Naive thymus-derived CD8-positive, alpha-beta T cell (primary cell): ENCODE measurements at regions of chr16 and their contacts with region 1.

Region 1: GRCh38 chr16:70737377-70738082 is 51.7 kb upstream of the MTSS2 start:
- DNase-seq: peak; percentile 65 to 94 (median 87)
- ATAC-seq: peak; percentile 86 to 88
- H3K4me3 Mint-ChIP-seq: peak overlapping the region; percentile 57 to 89 (median 84)
- H3K27ac Mint-ChIP-seq: peak overlapping the region; percentile 96 to 100 (median 100)
- H3K4me1 Mint-ChIP-seq: peaks cover 43 to 84% (median 67%) of the 10 kb centered on the region in 4 donors
- H3K27me3 Mint-ChIP-seq: no peaks in the 10 kb centered on the region

Region 2: DNA sequence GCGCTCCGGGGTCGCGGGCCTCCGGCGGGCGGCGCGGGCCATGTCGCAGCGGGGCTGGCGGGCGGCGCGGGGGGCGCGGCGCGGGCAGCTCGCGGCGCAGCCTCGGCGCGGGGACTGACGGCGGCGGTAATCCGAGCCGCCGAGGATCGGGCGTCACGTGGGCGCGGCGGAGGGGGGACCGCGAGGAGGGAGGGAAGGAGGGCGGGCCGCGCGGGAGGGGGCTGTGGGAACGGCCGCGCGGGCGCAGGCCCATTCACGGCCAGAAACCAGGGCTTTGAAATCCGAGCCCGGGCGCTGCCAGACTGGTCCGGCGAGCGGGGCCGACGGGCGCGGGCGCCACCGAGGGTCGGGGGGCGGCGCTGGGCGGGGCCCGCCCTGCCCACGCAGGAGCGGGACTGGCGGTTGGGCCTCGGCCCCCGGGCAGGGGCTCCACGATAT is 51.6 kb before region 1 on chr16 and contains the start of gene MTSS2:
- POLR2A ChIA-PET with region 1: interaction called, 50 read pairs
- DNase-seq: peak in 9 of 10 donors; percentile 25 to 73 (median 47)
- ATAC-seq: peak; percentile 76 to 78
- H3K4me3 Mint-ChIP-seq: peak within 1 kb of the TSS; percentile 64 to 85 (median 74)
- H3K27ac Mint-ChIP-seq: peak within 1 kb of the TSS in 9 of 10 donors; percentile 25 to 77 (median 53)
- H3K4me1 Mint-ChIP-seq: peaks cover 8 to 34% (median 18%) of the 10 kb centered on the region in 4 donors
- H3K27me3 Mint-ChIP-seq: peaks cover 0 to 5% (median 0%) of the 10 kb centered on the region in 5 donors
- polyA plus RNA-seq, gene MTSS2: 0.28 TPM in 1 of 3 donors, not detected in the others

Region 3: DNA sequence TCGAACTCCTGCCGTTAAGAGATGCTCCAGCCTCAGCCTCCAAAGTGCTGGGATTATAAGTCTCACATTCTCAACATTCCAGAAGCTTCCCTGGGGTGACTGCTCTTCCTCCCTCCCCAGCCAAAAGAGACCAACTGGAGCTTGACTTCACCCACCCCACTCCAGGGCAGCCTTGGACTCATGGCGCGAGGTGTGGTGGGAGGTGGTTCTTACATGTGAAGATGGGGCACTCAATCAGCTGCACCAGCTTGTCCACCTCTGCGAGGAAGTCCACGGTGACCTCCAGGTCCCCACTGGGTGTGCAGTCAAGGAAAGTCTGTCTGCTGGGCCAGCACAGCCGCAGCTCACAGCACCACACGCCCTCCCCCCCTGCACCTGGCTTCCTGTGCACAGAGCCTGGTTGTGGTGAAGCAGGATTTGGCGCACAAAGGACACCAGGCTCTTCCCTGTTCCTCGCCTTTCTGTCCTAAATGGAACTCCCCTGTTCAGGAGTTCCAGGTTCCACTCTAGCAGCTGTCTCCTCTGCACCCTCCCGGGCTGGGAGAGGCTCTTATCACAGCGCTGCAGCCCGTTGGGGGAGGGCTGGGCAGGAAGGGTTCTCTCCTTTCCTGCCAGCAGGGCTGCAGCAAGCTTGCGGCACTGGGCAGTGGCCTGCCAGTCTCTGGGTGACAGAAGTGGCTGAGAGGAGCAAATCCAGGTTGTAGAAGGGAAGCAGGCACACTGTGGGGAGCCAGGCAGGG is 42.0 kb before region 1 on chr16:
- POLR2A ChIA-PET with region 1: interaction called, 60 read pairs
- DNase-seq: peak in 5 of 10 donors; percentile 13 to 47 (median 35)
- ATAC-seq: peak; percentile 50 to 52
- H3K4me3 Mint-ChIP-seq: peak overlapping the region; percentile 53 to 87 (median 71)
- H3K27ac Mint-ChIP-seq: peak overlapping the region; percentile 84 to 96 (median 92)
- H3K4me1 Mint-ChIP-seq: peaks cover 24 to 48% (median 40%) of the 10 kb centered on the region in 4 donors
- H3K27me3 Mint-ChIP-seq: no peaks in the 10 kb centered on the region

Region 4: DNA sequence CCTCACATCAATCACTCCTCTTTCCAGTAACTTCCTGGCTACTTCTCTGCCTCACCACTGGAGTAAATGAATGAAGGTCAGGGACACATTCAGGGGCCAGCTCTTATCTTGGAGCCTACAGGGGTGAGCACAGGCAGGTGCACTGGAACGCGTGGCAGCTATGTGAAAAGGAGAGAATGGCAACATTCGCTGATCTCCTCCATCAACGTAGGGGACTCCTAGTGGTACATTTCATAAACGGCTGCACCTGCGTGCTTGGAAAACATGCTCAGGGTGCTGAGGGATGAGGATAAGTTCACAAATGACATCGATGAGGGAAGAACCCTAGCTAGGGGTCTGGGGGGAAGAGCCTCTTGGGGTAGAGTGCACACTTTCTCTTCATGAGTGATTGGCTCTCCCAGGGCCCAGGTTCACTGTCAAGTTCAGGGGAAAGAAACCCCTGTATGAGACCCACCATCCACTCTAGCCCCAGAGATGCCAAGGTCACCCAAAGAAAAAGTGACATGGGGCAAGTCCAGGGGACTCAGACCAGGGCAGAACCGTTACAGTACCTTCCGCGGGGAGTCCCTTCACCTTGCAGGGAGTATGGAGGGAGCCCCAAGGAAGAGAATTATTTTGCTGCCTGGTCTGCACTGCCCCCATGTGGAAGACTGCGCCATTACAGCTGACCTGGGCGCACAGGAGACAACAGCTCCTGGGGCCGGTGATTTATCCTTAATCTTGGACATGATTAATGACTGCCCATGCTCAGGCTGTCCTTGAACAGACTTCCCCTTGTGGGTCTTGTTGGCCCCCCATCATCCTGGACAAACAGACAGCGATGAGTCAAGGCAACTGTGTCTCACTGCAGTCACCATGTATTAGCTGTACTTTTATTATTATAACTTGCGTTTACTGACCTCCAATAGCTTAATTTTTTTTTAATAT is 33.4 kb after region 1 on chr16:
- POLR2A ChIA-PET with region 1: interaction called, 24 read pairs
- DNase-seq: peak; percentile 41 to 76 (median 62)
- ATAC-seq: peak; percentile 80 to 91
- H3K4me3 Mint-ChIP-seq: no peak overlapping the region
- H3K27ac Mint-ChIP-seq: peak overlapping the region in 6 of 10 donors; percentile 43 to 65 (median 54)
- H3K4me1 Mint-ChIP-seq: peaks cover 0 to 6% (median 0%) of the 10 kb centered on the region in 4 donors
- H3K27me3 Mint-ChIP-seq: no peaks in the 10 kb centered on the region

Region 5: DNA sequence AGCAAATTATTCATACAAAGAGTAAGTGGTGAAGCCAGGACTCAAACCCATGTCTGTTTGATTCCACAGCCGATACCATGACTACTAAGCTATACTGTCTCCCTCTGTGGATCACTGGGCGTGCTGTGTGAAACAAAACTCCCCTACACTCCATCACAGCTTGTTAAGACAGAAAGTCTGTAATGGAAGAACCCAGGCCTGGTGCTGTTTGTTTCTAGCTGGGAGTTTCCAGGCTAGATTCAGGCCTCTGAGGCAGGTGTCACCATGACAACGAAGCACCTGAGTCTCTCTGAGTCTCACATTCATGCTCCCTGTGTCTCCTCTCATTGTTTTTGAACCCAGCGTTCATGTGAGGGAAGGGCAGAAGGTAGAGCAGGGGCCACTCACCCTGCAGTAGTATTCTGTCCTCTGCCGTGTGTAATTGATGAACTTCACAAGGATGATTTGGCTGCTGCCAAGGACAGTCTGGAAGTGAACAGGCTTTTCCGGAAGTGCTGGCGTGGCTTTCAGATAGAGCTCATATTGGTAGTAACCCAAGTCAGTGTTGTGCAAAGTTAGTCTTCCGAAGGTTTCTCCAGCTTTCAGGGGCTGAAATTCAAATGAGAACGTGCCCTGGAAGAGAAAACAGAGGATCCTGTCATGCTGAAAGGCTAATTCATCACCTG is 72.0 kb after region 1 on chr16:
- POLR2A ChIA-PET with region 1: no interaction called
- DNase-seq: no peak
- ATAC-seq: peak in 1 of 2 donors; percentile 22
- H3K4me3 Mint-ChIP-seq: no peak overlapping the region
- H3K27ac Mint-ChIP-seq: no peak overlapping the region
- H3K4me1 Mint-ChIP-seq: no peaks in the 10 kb centered on the region
- H3K27me3 Mint-ChIP-seq: peaks cover 9 to 32% (median 19%) of the 10 kb centered on the region in 5 donors